Aorta (tissue), 5 donors: ENCODE measurements at regions of chr10 and their contacts with region 1.

Region 1: DNA sequence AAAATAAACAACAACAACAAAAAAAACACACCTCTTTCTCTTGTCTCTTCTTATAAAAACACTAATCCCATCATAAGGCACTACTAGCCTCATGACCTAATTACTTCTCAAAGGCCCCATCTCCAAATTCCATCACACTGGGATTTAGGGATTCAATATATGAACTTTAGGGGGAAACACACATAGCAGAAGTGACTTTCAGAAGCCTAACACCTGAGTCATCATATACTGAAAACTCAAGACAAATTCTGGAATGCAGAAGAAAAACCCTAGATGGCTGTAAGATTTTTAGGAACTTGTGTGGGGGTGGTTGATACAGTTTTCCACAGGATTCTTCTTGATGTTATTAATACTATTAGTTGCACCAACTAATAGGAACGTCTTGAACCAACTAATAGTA is 33.7 kb upstream of the CSTF2T start:
- DNase-seq: no peak
- ATAC-seq: no peak
- H3K4me3 ChIP-seq: no peak overlapping the region
- H3K27ac ChIP-seq: peak overlapping the region in 1 of 2 donors; percentile 30
- H3K4me1 ChIP-seq: peaks cover 2 to 6% of the 10 kb centered on the region in 2 donors
- H3K27me3 ChIP-seq: no peaks in the 10 kb centered on the region

Region 2: DNA sequence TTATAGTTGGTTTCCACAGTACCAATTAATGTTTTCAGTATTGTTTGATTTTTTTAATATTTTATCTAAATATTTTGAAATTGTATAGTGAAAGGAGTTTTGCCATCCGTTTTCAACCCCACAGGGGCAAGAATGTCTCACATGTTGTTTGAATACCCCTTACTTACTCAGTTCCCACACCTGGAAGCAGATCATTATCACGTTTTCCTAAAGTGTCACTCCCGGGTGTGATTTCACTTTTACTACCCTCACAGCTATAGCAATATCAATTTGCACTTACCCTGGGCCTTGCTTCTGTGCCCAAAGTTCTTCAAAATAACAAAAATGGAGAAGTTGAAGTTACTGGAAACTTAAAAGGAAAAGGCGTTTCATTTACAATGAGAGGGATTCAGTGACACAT is 261.8 kb before region 1 on chr10:
- intact Hi-C with region 1: no loop called
- DNase-seq: no peak
- ATAC-seq: no peak
- H3K4me3 ChIP-seq: no peak overlapping the region
- H3K27ac ChIP-seq: no peak overlapping the region
- H3K4me1 ChIP-seq: peaks cover 0 to 6% of the 10 kb centered on the region in 2 donors
- H3K27me3 ChIP-seq: no peaks in the 10 kb centered on the region

Region 3: DNA sequence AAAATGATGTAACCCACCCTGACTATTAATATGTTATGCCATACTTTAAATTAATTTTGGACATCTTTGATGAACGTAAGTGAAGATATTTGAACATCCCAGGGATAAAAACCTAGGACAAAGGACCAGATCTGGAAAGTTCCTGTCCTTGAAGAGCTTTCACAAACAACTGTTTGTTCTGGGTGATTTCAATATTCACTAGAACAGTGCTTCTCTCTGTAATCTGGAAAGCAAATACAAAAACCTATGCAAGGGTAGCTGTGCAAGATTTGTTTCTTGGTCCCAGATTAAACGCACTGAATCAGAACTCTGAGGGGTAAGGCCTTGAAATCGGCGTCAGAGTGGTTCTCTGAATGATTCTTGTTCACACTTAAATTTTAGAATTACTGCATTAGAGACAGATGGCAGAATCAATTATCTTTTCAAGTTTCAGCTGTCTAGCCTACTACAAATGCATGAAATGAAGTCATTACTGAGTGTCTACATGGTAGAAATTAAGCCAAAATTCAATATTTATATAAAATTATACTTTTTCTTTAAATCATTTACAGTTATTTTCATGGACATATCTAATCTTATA is 35.9 kb after region 1 on chr10:
- intact Hi-C with region 1: loop called in 1 of 2 experiments (anchors 5 kb)
- DNase-seq: no peak
- ATAC-seq: no peak
- H3K4me3 ChIP-seq: no peak overlapping the region
- H3K27ac ChIP-seq: no peak overlapping the region
- H3K4me1 ChIP-seq: peaks cover 5% of the 10 kb centered on the region in 2 donors
- H3K27me3 ChIP-seq: no peaks in the 10 kb centered on the region